ENCODE measurements at regions of chr6 and their contacts with region 1.

Region 1: DNA sequence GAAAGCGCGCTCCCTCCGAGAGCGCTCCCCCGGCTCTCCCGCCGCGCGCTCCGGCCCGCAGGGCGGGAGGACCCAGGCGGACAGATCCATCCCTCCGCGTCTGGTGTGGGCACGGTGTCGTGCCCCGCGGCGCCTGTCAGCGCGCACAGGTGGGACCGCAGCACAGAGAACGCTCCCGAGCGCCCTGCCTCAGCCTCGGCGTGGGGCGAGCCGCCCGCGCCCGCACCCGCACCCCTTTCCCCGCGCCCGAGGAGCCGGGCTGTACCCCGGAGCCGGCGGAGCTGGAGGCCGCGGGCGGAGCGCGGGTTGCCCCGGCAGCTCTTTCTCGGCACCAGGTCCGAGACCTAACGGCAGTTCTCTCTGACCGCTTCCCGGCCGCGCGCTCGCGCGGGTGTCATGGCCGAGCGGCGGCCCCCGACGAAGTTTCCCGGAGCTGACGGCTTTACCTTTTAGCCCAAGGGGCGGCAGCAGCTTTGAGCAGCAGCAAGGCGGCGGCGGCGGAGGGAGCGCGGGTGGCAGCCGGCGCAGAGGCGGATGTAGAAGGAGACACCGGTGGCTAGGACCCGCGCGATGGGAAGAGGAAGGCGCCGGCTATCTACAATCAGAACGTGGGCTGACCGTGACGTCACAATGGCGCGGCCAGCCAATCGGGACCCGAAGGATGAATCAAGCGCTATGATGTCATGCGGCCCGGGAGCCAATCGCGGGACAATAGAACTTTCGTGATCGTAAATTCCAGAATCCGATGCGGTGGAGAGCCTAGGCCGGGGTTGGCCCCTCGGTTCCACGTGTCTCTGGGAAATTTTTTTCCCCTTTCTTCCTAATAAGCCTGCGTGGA is at the start of gene ELOVL5:
- DNase-seq: peak; percentile 96 to 100 (median 98)

Region 2: GRCh38 chr6:52284460-52285176 is 1064.0 kb before region 1 on chr6 and contains the start of gene MCM3:
- intact Hi-C with region 1: no loop called
- DNase-seq: peak; percentile 96 to 100 (median 98)

Region 3: DNA sequence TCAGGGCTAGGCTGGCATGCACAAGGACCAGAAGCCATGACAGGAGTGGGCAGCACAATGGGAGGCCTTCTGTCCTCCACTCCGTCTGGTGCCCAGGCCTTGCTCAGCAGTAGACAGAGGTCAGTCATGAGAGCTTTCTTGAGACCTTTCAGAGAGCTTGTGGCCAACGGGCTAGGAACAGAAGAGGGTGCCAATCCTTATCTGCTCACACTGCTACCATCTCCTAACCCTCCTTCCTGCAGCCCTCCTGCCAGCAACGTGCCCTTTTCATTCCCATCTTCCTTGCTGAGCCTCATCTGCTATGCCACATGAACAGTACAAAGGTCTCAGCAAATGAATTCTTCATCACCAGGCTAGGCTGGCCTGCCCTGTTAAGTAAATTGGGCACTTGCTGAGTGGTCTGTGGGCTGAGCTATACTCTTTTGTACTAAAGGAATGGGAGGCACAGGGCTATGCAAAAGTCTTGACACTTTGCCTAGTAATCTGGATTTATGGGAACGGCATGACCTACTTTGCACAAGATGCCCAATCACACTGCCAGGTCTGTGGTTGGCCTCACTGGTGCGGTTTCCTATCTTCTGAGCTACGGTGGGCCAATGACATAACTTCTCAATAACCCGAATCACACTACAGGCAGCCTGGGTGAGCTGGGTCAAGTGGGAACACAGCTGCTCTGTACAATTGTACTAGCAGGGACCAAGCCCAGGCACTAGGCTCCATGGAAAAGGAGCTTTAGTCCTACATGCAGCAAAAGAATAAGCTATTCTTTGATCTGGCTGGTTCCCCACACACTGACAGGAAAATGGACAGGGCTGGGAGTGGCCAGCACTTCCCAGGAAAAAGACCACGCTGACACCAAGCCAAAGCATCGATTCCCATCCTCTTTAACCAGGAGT is 47.7 kb before region 1 on chr6:
- intact Hi-C with region 1: loop called (anchors 5 kb)
- DNase-seq: peak in 9 of 10 donors; percentile 27 to 91 (median 48)

Region 4: GRCh38 chr6:53359072-53359842 is 10.7 kb after region 1 on chr6:
- intact Hi-C with region 1: loop called (anchors 1 kb)
- DNase-seq: peak; percentile 94 to 99 (median 96)

Measured in posterior cingulate gyrus (tissue), 11 donors.